Common myeloid progenitor, CD34-positive (primary cell): ENCODE measurements at regions of chr22 and their contacts with region 1.

Region 1: DNA sequence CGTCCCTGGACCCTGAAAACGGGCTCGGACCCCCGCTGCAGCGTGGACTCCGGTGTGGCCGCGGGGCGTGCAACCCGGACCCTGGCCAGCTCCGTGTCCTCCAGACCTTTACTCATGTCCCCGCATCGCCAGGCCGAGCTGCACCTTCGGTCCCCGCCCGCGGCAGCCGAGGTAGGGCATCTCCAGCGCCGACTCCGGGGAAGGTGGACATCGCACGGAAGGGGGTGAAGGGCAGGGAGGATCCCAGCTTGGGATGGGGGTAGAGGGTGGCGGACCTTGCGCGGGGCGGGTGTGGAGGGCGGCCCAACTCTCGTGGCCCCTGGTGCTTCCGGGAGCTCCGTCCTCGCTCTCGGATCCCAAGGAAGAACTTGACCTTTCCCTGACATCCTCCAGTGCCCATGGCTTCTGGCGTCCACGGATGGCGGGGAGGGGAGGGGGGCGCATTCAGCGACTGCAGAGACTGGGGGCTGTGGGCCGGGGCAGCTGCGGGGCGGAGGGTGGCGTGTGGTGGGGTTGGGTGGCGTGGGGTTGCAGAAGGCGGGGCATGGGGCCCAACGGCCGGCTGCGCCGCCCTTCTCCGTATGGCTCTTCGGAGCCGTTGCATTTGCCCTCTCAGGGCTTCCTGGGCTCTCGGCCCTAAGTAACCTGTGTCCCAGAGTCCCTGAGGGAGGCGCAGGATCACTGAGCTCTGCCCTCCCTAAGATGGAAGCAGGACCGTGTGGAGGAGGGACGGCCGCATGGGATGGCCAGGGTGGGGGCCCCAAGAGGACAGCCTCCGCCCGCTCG is 9.5 kb upstream of the AIFM3 start:
- DNase-seq: peak; percentile 31 to 56 (median 48)
- H3K4me3 ChIP-seq: peak overlapping the region; percentile 62 to 92 (median 76)
- H3K27ac ChIP-seq: no peak overlapping the region
- H3K4me1 ChIP-seq: peaks cover 0 to 21% (median 17%) of the 10 kb centered on the region in 4 experiments
- H3K27me3 ChIP-seq: no peaks in the 10 kb centered on the region

Region 2: GRCh38 chr22:20968281-20968977 is 10.9 kb after region 1 on chr22:
- CTCF ChIA-PET with region 1: interaction called, 12 read pairs
- POLR2A ChIA-PET with region 1: interaction called, 4 read pairs
- DNase-seq: peak in 2 of 3 donors; percentile 42 to 50
- H3K4me3 ChIP-seq: no peak overlapping the region
- H3K27ac ChIP-seq: no peak overlapping the region
- H3K4me1 ChIP-seq: peaks cover 0 to 46% (median 25%) of the 10 kb centered on the region in 4 experiments
- H3K27me3 ChIP-seq: peaks cover 0 to 21% (median 5%) of the 10 kb centered on the region in 5 experiments

Region 3: DNA sequence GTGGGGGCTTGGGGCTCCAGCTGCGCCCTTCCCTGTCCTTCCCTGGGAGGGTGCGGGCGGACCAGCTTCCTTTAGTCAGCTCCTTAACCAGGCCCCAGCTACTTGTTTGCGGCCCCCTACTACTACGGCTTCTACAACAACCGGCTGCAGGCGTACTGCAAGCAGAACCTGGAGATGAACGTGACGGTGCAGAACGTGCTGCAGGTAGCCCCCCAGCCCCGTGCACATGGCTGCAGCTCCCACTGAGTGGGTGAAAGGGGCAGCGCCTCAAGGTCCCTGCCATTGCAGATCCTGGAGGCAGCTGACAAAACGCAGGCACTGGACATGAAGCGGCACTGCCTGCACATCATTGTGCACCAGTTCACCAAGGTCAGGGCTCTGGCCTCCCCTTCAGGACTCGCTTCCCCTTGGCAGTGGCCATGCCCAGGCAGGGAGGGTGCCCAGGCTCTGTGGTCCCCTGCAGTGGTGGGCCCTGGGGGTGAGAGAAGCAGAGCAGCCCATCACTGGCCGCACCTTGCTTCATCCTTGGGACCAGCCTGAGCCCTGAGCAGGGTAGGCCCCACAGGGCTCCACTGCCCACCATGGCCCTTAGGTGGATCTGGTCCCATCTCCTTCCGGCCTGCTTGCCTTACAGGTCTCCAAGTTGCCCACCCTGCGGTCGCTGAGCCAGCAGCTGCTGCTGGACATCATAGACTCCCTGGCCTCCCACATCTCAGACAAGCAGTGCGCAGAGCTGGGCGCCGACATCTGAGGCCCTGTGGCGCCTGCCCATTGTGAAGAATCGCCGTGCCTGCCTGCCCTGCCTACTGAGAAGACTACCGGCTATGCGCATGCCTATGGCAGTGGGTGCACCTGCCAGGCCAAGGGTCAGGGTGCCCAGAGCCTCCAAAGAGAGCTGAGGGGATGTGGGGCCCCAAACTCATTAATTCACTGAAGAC is 39.4 kb after region 1 on chr22:
- CTCF ChIA-PET with region 1: no interaction called
- POLR2A ChIA-PET with region 1: no interaction called
- DNase-seq: no peak
- H3K4me3 ChIP-seq: no peak overlapping the region
- H3K27ac ChIP-seq: no peak overlapping the region
- H3K4me1 ChIP-seq: peaks cover 0 to 22% (median 20%) of the 10 kb centered on the region in 4 experiments
- H3K27me3 ChIP-seq: no peaks in the 10 kb centered on the region

Region 4: DNA sequence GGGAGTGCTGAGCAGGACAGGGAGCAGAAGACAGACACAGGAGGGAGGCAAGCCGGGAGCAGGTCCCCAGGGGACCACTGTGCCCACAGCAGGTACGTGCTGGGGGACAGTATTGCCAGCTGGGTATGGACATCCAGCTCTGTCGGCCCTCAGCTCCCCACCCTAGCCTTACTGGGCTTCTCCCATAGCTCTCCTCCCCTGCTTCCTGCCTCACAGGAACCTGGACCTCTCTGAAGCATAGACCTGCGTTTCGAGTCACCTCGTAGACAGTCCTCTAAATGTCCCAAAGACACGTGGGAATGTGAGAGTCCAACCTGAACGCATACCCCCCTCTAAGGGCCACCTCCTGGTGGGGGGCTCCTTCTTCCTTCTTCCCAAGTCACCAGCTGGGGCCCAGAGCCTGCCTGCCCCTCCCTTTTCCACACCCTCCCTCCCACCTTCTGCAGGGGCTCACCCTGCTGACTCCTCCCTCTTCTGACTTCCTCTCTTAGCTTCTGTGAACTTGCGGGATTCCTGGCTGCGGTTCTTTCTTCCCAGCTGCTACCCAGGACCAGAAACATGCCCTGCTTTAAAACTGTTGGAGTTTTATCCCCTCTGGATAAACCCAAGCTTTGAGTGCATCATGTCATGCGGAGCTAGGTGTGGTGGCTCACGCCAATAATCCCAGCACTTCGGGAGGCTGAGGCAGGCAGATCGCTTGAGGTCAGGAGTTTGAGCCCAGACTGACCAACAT is 98.2 kb after region 1 on chr22:
- CTCF ChIA-PET with region 1: no interaction called
- POLR2A ChIA-PET with region 1: no interaction called
- DNase-seq: peak in 2 of 3 donors; percentile 58 to 60
- H3K4me3 ChIP-seq: peak overlapping the region in 6 of 7 experiments; percentile 13 to 63 (median 25)
- H3K27ac ChIP-seq: no peak overlapping the region
- H3K4me1 ChIP-seq: peaks cover 0 to 18% (median 16%) of the 10 kb centered on the region in 4 experiments
- H3K27me3 ChIP-seq: peaks cover 0 to 8% (median 2%) of the 10 kb centered on the region in 5 experiments